Tibial artery (tissue), 4 donors: ENCODE measurements at regions of chr3 and their contacts with region 1.

Region 1: GRCh38 chr3:100893590-100893989 is 99.6 kb downstream of the ABI3BP start:
- DNase-seq: peak in 1 of 2 donors; percentile 66
- H3K4me3 ChIP-seq: no peak overlapping the region
- H3K27ac ChIP-seq: no peak overlapping the region
- H3K4me1 ChIP-seq: peaks cover 0 to 4% (median 0%) of the 10 kb centered on the region in 4 donors
- H3K27me3 ChIP-seq: no peaks in the 10 kb centered on the region
- CTCF ChIP-seq: peak; percentile 52 to 53

Region 2: GRCh38 chr3:100993309-100993708 is 99.7 kb after region 1 on chr3 and contains the start of gene ABI3BP:
- intact Hi-C with region 1: no loop called
- DNase-seq: peak; percentile 86 to 91
- H3K4me3 ChIP-seq: peak within 1 kb of the TSS; percentile 45 to 50
- H3K27ac ChIP-seq: peak within 1 kb of the TSS; percentile 68 to 74
- H3K4me1 ChIP-seq: peaks cover 0 to 22% (median 12%) of the 10 kb centered on the region in 4 donors
- H3K27me3 ChIP-seq: no peaks in the 10 kb centered on the region
- CTCF ChIP-seq: no peak

Region 3: GRCh38 chr3:101193957-101194356 is 300.4 kb after region 1 on chr3:
- intact Hi-C with region 1: loop called (anchors 5 kb)
- DNase-seq: no peak
- H3K4me3 ChIP-seq: no peak overlapping the region
- H3K27ac ChIP-seq: no peak overlapping the region
- H3K4me1 ChIP-seq: peaks cover 0 to 7% (median 2%) of the 10 kb centered on the region in 4 donors
- H3K27me3 ChIP-seq: no peaks in the 10 kb centered on the region
- CTCF ChIP-seq: no peak

Region 4: DNA sequence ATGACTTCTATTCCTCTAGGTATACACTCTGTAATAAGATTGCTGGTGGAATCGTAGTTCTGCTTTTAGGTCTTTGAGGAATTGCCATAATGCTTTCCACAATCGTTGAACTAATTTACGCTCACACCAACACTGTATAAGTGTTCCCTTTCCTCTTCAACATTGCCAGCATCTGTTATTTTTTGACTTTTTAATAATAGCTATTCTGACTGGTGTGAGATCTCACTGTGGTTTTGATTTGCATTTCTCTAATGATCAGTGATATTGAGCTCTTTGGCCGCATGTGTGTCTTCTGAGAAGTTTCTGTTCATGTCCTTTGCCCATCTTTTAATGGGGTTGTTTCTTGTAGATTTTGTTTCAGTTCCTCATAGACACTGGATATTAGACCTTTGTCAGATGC is 898.2 kb after region 1 on chr3:
- intact Hi-C with region 1: no loop called
- DNase-seq: no peak
- H3K4me3 ChIP-seq: no peak overlapping the region
- H3K27ac ChIP-seq: no peak overlapping the region
- H3K4me1 ChIP-seq: no peaks in the 10 kb centered on the region
- H3K27me3 ChIP-seq: no peaks in the 10 kb centered on the region
- CTCF ChIP-seq: no peak